ENCODE measurements at regions of chr17 and their contacts with region 1.

Region 1: GRCh38 chr17:39730095-39730921 is at the start of gene MIEN1:
- DNase-seq: peak; percentile 91 to 95 (median 94)
- H3K4me3 ChIP-seq: peak within 1 kb of the TSS; percentile 91
- H3K4me3 Mint-ChIP-seq: peak within 1 kb of the TSS; percentile 89 to 95 (median 91)
- H3K27ac ChIP-seq: peak within 1 kb of the TSS; percentile 90
- H3K27ac Mint-ChIP-seq: peak within 1 kb of the TSS; percentile 89 to 98 (median 94)
- H3K4me1 ChIP-seq: peaks cover 15% of the 10 kb centered on the region
- H3K4me1 Mint-ChIP-seq: peaks cover 14 to 21% (median 15%) of the 10 kb centered on the region in 3 donors
- H3K27me3 ChIP-seq: no peaks in the 10 kb centered on the region
- H3K27me3 Mint-ChIP-seq: no peaks in the 10 kb centered on the region
- total RNA-seq, gene MIEN1: 42.3 to 46.2 TPM

Region 2: GRCh38 chr17:39846205-39846604 is 115.9 kb after region 1 on chr17:
- CTCF ChIA-PET with region 1: no interaction called
- POLR2A ChIA-PET with region 1: interaction called, 15 read pairs
- DNase-seq: no peak
- H3K4me3 ChIP-seq: no peak overlapping the region
- H3K4me3 Mint-ChIP-seq: peak overlapping the region in 3 of 7 donors; percentile 3 to 49 (median 10)
- H3K27ac ChIP-seq: no peak overlapping the region
- H3K27ac Mint-ChIP-seq: peak overlapping the region in 7 of 8 donors; percentile 45 to 85 (median 72)
- H3K4me1 ChIP-seq: peaks cover 57% of the 10 kb centered on the region
- H3K4me1 Mint-ChIP-seq: peaks cover 69 to 86% (median 81%) of the 10 kb centered on the region in 3 donors
- H3K27me3 ChIP-seq: no peaks in the 10 kb centered on the region
- H3K27me3 Mint-ChIP-seq: no peaks in the 10 kb centered on the region